ENCODE measurements at regions of chr6 and their contacts with region 1.

Region 1: GRCh38 chr6:39992861-39993622 is 58.8 kb upstream of the MOCS1 start:
- DNase-seq: no peak
- H3K4me3 ChIP-seq: no peak overlapping the region
- H3K27ac ChIP-seq: no peak overlapping the region
- H3K4me1 ChIP-seq: no peaks in the 10 kb centered on the region
- H3K27me3 ChIP-seq: no peaks in the 10 kb centered on the region
- CTCF ChIP-seq: no peak
- POLR2A ChIP-seq: no peak

Region 2: DNA sequence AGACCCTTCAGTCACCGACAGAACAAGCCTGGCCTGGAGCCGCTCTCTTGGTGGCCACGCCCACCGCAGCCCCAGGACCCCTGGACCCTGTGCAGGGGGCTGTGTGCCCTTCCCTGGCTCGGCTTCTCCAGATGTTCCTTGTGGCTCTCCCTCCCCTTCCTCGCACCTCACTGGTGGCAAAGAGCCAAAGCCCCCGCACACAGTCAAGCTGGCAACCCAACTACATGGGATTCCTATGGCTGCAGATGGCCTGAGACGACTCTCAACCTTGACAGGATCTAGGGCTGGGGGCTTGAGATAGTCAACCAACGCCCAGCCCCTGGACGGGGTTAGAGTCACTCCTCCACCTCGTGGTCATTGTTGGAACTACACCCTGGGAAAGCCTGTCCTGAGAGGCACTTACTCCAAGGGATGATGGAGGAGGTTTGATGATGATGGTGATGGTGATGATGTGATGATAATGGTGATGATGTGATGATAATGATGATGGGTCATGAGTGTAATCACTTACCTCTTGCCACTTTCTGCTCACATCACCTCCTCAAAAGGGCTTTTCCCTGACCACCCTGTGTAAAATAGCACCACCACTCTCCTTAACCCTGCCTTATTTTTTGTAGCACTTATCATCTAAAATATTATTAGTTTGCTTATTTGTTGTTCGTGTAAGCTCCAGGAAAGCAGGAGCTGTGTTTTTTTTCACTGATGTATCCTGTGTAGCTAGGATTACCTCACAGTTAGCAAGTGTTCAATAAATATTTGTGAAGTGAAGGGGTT is 315.7 kb after region 1 on chr6:
- intact Hi-C with region 1: loop called (anchors 10 kb)
- DNase-seq: no peak
- H3K4me3 ChIP-seq: no peak overlapping the region
- H3K27ac ChIP-seq: no peak overlapping the region
- H3K4me1 ChIP-seq: no peaks in the 10 kb centered on the region
- H3K27me3 ChIP-seq: no peaks in the 10 kb centered on the region
- CTCF ChIP-seq: peak; percentile 47 to 71 (median 60)
- POLR2A ChIP-seq: no peak

Measured in vagina (tissue), 2 donors.